Natural killer cell (primary cell): ENCODE measurements at regions of chr17 and their contacts with region 1.

Region 1: GRCh38 chr17:64320613-64321553 is 57.8 kb upstream of the TEX2 start:
- DNase-seq: peak; percentile 39 to 82
- ATAC-seq: peak; percentile 58 to 72 (median 61)
- H3K4me3 ChIP-seq: no peak overlapping the region
- H3K4me3 Mint-ChIP-seq: peak overlapping the region; percentile 62
- H3K27ac ChIP-seq: no peak overlapping the region
- H3K27ac Mint-ChIP-seq: peak overlapping the region; percentile 44 to 45
- H3K4me1 ChIP-seq: peaks cover 20% of the 10 kb centered on the region
- H3K4me1 Mint-ChIP-seq: peaks cover 35 to 40% of the 10 kb centered on the region in 2 donors
- H3K27me3 ChIP-seq: no peaks in the 10 kb centered on the region
- H3K27me3 Mint-ChIP-seq: no peaks in the 10 kb centered on the region
- CTCF ChIP-seq: peak; percentile 91

Region 2: GRCh38 chr17:64056269-64057005 is 264.4 kb before region 1 on chr17:
- intact Hi-C with region 1: no loop called
- DNase-seq: peak in 1 of 2 donors; percentile 27
- ATAC-seq: peak in 2 of 3 donors; percentile 15 to 25
- H3K4me3 ChIP-seq: no peak overlapping the region
- H3K4me3 Mint-ChIP-seq: no peak overlapping the region
- H3K27ac ChIP-seq: peak overlapping the region; percentile 45
- H3K27ac Mint-ChIP-seq: peak overlapping the region; percentile 53 to 78
- H3K4me1 ChIP-seq: peaks cover 44% of the 10 kb centered on the region
- H3K4me1 Mint-ChIP-seq: peaks cover 43 to 44% of the 10 kb centered on the region in 2 donors
- H3K27me3 ChIP-seq: no peaks in the 10 kb centered on the region
- H3K27me3 Mint-ChIP-seq: no peaks in the 10 kb centered on the region
- CTCF ChIP-seq: no peak

Region 3: DNA sequence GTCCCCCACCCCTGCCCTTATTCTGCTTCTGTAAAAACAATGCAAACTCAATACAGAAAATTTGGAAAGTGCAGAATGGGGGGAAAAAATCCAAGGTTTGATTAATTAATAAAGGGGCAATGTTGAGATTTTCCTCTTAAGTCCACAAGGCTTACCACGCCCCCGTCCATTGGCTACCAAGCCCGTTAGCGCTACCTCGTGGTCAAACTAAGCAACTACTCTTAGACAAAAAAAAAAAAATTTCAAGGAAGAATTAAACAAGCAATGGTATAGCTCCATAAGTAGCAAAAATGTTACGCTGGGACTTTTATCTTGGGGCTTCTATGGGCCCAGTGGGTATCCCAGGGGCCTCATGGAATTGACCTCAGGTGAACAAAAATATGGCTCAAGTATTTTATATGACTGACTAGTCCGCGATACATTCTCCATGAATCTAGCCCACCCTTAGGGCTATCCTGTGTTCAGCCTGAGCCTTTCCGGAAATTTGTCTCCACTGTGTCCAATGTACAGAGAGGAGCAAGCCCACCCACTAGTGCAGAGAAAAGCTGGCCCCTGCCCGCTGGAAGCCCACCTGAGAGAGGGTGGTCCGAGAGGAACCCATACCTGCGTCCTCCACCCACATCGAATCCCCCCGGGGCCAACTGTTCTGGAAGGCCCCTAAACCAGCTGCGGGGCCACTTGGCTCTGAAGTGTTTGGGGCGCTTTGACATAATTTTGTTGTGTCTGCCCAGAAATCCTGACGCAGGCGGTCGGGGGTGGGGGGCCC is 38.7 kb before region 1 on chr17:
- intact Hi-C with region 1: no loop called
- DNase-seq: peak; percentile 26 to 83
- ATAC-seq: peak; percentile 59 to 85 (median 82)
- H3K4me3 ChIP-seq: no peak overlapping the region
- H3K4me3 Mint-ChIP-seq: no peak overlapping the region
- H3K27ac ChIP-seq: no peak overlapping the region
- H3K27ac Mint-ChIP-seq: no peak overlapping the region
- H3K4me1 ChIP-seq: no peaks in the 10 kb centered on the region
- H3K4me1 Mint-ChIP-seq: no peaks in the 10 kb centered on the region
- H3K27me3 ChIP-seq: no peaks in the 10 kb centered on the region
- H3K27me3 Mint-ChIP-seq: no peaks in the 10 kb centered on the region
- CTCF ChIP-seq: peak; percentile 71

Region 4: DNA sequence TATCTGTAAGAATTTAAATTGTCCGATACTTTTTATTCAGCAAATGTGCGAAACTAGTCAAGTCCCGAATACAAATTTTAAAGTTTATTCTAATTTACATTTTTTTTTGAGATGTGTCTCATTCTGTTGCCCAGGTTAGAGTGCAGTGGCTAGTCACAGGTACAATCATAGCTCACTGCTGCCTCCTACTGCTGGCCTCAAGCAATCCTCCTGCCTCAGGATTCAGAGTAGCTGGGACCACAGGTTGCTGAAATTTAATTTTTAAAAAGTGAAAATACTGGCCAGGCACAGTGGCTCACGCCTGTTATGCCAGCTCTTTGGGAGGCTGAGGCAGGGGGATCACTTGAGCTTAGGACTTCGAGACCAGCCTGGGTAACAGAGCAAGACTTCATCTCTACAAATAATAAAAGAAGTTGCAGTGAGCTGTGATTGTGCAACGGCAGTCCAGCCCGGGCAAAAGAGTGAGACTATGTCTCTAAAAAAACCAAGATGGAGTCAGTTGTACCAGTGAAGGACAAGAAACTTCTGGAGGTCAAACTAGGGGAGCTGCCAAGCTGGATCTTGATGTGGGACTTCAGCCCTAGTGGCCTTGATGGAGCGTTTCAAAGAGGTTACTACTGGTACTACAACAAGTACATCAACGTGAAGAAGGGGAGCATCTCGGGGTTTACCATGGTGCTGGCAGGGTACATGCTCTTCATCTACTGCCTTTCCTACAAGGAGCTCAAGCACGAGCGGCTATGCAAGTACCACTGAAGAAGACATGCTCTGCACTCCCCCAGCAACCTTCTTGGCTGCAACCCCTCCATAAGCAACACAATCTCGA is 170.4 kb after region 1 on chr17:
- intact Hi-C with region 1: loop called (anchors 5 kb)
- DNase-seq: peak in 1 of 2 donors; percentile 75
- ATAC-seq: peak; percentile 42 to 81 (median 64)
- H3K4me3 ChIP-seq: no peak overlapping the region
- H3K4me3 Mint-ChIP-seq: no peak overlapping the region
- H3K27ac ChIP-seq: no peak overlapping the region
- H3K27ac Mint-ChIP-seq: peak overlapping the region; percentile 18 to 23
- H3K4me1 ChIP-seq: peaks cover 18% of the 10 kb centered on the region
- H3K4me1 Mint-ChIP-seq: peaks cover 15 to 19% of the 10 kb centered on the region in 2 donors
- H3K27me3 ChIP-seq: no peaks in the 10 kb centered on the region
- H3K27me3 Mint-ChIP-seq: no peaks in the 10 kb centered on the region
- CTCF ChIP-seq: peak; percentile 51